Left cardiac atrium (tissue), 4 donors: ENCODE measurements at regions of chr2 and their contacts with region 1.

Region 1: DNA sequence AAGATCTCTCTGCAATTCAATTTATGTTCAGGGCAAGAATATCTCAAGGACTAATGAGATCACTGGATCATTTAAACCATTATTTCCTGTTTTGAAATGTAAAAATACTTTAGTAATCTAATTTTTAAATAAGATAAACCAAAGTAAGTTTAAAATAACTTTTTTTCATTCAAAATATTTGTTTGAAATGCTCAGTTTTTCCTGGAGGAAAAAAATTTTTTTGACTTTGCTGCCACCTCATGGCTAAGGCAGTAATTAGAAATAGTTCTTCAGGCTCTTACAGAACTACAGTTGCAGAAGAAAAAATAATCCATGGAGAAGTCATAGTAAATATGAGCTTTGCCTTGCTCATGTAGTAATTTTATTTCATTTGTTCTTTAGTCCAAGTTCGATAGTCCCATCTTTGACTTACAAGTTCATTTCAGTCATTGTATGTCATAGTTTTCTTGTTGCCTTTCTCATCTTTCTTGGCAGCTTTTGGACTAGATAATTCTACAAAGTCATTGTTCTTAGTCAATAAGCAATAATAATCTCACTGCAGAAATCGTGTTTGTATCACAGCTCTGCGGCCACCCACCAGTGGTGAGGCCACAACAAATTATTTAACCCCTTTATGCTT is 127.4 kb downstream of the DPP4 start:
- DNase-seq: no peak
- ATAC-seq: no peak

Region 2: DNA sequence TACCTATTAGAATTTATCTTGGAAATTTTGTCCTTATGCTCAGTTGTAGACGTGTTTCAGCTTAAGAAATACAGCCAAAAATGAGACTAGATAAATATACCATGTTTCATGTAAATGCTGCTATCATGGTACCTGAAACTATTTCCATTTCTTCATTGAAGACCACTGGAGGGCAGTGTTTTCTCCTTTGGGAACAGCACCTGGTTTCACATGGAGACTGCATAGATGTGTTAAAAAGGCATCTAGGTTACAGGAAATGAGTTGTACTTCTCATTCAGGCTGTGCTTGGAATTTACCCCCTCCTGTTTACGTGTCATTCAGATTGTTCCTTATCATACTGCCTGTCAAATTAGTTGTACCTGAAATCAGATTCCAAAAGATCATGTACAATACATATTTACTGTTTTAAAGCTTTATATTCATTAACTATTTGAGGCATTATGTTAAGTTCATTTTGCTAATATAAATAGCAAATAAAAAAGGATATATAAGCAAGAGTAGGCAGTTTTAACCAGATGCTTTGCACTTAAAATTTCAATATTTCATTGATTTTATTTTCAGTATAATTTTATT is 695.6 kb before region 1 on chr2:
- intact Hi-C with region 1: loop called in 1 of 2 experiments (anchors 10 kb)
- DNase-seq: no peak
- ATAC-seq: peak in 1 of 2 donors; percentile 37